ENCODE measurements at regions of chr5 and their contacts with region 1.

Region 1: DNA sequence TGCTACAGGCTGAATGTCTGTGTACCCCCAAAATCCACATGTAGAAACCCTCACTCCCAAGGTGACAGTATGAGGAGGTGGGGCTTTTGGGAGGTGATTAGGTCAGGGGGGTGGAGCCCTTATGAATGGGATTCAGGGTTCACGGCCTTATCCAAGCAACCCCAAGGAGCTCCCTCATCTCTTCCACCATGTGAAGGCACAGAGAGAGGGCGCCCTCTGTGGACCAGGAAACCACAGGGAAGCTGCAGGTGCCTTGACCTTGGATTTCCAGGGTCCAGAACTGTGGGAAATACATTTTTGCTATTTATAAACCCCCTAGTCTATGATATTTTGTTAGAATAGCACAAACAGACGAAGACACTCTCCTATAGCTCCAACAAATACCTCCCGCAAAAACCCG is 53.6 kb upstream of the IRX2 start:
- DNase-seq: peak; percentile 36 to 74
- H3K4me3 ChIP-seq: no peak overlapping the region
- H3K27ac ChIP-seq: no peak overlapping the region
- H3K4me1 ChIP-seq: no peaks in the 10 kb centered on the region
- H3K27me3 ChIP-seq: no peaks in the 10 kb centered on the region
- CTCF ChIP-seq: peak; percentile 68 to 77 (median 76)
- EP300 ChIP-seq: no peak
- POLR2A ChIP-seq: no peak
- RAD21 ChIP-seq: peak; percentile 82 to 91

Region 2: DNA sequence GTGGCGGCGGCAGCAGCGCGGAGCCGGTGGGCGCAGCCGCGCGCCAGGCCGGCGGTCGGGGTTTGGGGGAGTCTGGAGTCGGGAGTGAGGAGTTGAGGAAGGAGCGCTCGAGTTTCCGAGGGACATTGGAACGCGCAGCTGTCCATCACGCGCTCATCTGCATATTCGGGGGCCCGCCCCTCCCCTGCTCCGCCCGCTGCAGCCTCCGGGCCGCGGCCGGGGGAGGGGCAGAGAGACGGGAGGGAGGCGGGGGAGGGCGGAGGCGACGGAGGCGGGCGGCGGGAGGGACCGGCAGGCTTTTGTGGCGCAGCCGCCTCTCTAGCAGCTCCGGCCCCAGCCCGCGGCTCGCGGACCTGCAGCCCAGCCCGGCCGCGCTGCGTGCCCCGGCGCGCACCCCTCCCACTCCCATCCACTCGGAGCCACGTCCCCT is 53.5 kb before region 1 on chr5 and contains the start of gene IRX2:
- CTCF ChIA-PET with region 1: interaction called, 17 read pairs
- POLR2A ChIA-PET with region 1: interaction called, 10 read pairs
- DNase-seq: peak; percentile 77 to 90
- H3K4me3 ChIP-seq: peak within 1 kb of the TSS; percentile 77 to 98 (median 80)
- H3K27ac ChIP-seq: peak within 1 kb of the TSS; percentile 62; the same call in 1 of the 2 replicates
- H3K4me1 ChIP-seq: peaks cover 0 to 27% (median 9%) of the 10 kb centered on the region in 4 experiments; a peak in 6 of 7 replicates
- H3K27me3 ChIP-seq: peaks cover 4 to 42% (median 29%) of the 10 kb centered on the region in 4 experiments
- CTCF ChIP-seq: no peak
- EP300 ChIP-seq: no peak
- POLR2A ChIP-seq: peak in 1 of 2 experiments; percentile 84; a peak in 2 of 3 replicates
- RAD21 ChIP-seq: 0 out of 4 replicates have a peak, but pooled peaks of 1 of the 2 experiments have one; percentile 4
- total RNA-seq, gene IRX2: 40.4 and 47.5 TPM in 2 replicates

Region 3: GRCh38 chr5:2780394-2781171 is 24.5 kb before region 1 on chr5:
- CTCF ChIA-PET with region 1: interaction called, 14 read pairs
- POLR2A ChIA-PET with region 1: interaction called, 3 read pairs
- DNase-seq: no peak
- H3K4me3 ChIP-seq: peak overlapping the region in 1 of 4 experiments; percentile 7; a peak in 2 of 8 replicates
- H3K27ac ChIP-seq: no peak overlapping the region
- H3K4me1 ChIP-seq: peaks cover 0 to 10% (median 6%) of the 10 kb centered on the region in 4 experiments; a peak in 4 of 7 replicates
- H3K27me3 ChIP-seq: no peaks in the 10 kb centered on the region
- CTCF ChIP-seq: peak in 1 of 3 experiments; percentile 9; a peak in 1 of 4 replicates
- EP300 ChIP-seq: 0 out of 3 replicates have a peak, but pooled peaks of 1 of the 2 experiments have one; percentile 53
- POLR2A ChIP-seq: 0 out of 3 replicates have a peak, but pooled peaks of 1 of the 2 experiments have one; percentile 18
- RAD21 ChIP-seq: peak in 1 of 2 experiments; percentile 12; a peak in 2 of 4 replicates